Left lung (tissue), 14 donors: ENCODE measurements at regions of chr1 and their contacts with region 1.

Region 1: DNA sequence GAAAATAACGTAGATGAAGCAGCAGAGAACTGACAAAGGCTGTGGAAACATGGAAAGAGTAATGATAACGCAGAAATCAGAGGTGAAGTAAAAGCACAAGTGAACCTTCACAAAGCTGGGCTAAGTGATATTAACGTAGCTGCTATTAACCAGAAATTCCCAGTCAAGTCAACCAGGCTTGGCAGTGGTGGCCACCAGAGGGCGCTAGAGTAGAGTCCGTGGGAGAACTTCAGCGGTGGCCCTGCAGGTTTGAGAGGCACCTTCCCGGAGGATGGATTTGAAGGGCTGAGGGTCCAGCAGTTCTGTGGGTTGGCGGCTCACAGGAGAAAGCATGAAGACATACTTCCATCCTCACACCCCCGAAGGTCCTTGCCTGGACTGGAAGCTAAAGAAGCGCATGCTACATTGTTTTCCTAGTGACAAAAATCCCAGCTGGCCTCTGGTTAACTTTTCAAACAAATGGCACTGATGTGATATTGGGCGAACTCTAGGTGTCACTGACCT is 81.7 kb upstream of the ZNF648 start:
- DNase-seq: peak; percentile 84 to 95 (median 90)
- ATAC-seq: peak; percentile 84
- H3K4me3 ChIP-seq: no peak overlapping the region
- H3K27ac ChIP-seq: peak overlapping the region; percentile 92 to 99
- H3K4me1 ChIP-seq: peaks cover 19 to 55% of the 10 kb centered on the region in 2 donors
- H3K27me3 ChIP-seq: no peaks in the 10 kb centered on the region
- CTCF ChIP-seq: peak; percentile 91 to 97

Region 2: GRCh38 chr1:182084487-182085316 is 58.5 kb before region 1 on chr1:
- intact Hi-C with region 1: loop called in 1 of 2 experiments (anchors 5 kb)
- DNase-seq: peak; percentile 72 to 90 (median 86)
- ATAC-seq: peak; percentile 97
- H3K4me3 ChIP-seq: no peak overlapping the region
- H3K27ac ChIP-seq: peak overlapping the region; percentile 13 to 31
- H3K4me1 ChIP-seq: peaks cover 2 to 24% of the 10 kb centered on the region in 2 donors
- H3K27me3 ChIP-seq: no peaks in the 10 kb centered on the region
- CTCF ChIP-seq: peak; percentile 84 to 95

Region 3: DNA sequence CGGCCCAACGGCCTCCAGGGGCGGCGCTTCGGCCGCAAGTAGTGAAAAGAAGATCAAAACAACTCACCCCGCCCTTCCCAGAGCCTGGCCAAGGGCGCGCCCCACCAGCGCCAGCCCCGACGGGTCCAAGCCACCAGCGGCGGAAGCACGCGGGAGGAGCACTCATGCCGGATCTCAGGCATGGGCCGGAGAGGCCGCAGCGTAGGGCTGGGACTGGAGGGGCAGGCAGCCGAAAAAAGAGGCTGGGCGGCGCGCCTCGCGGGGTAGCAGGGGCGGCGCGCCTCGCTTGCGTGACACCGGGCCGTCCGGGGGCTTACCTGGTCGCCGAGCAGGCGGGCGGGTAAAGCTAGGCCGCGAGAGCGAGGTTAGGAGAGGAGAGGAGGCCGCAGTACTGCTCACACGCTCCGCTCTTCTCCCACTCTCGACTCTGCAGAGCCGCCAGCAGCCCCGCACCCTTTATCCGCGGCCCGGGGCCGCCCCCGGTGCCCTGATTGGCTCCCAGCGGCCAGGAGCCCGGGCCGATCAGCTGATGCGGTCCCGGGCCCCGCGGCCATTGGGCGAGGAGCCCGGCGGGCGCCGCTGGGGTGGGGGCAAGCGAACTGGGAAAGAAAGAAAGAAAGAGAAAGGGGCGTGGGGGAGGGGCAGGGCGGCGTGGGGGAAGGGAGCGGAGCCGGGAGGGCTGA is 248.3 kb after region 1 on chr1 and contains the start of gene GLUL:
- intact Hi-C with region 1: loop called (anchors 5 to 10 kb)
- DNase-seq: peak; percentile 92 to 98 (median 96)
- ATAC-seq: peak; percentile 90
- H3K4me3 ChIP-seq: peak within 1 kb of the TSS; percentile 70 to 95
- H3K27ac ChIP-seq: peak within 1 kb of the TSS; percentile 99
- H3K4me1 ChIP-seq: peaks cover 0 to 72% of the 10 kb centered on the region in 2 donors
- H3K27me3 ChIP-seq: no peaks in the 10 kb centered on the region
- CTCF ChIP-seq: peak in 1 of 2 donors; percentile 38
- polyA plus RNA-seq, gene GLUL: 377 to 463 (median 429) TPM

Region 4: DNA sequence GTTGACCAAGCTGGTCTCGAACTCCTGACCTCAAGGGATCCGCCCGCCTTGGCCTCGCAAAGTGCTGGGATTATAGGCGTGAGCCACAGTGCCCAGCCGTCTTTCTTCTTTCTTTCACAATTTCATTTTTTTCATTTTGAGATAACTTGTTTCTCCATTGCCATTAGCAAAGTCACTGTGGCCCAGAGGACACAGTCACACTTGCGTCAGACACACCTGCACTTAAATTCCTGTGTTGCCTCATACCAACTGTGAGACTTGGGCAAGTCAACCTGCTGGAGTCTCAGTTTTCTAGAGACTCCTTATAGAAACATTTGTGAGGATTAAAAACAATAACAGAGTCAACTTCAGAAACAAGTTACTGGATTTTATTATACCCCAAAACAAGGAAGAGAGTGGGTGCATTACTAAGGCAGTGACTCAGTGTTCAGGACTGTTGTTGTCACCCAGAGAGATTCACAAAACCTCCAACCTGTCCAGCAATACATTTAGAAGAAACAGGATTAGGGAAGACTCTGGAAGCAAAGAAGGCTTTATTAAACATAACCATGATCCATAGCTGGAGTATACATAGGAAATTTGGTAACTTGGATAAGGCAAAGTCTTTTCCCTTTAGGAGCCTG is 254.7 kb after region 1 on chr1:
- intact Hi-C with region 1: loop called (anchors 5 to 10 kb)
- DNase-seq: peak in 1 of 4 donors; percentile 52
- ATAC-seq: peak; percentile 71
- H3K4me3 ChIP-seq: no peak overlapping the region
- H3K27ac ChIP-seq: peak overlapping the region; percentile 39 to 59
- H3K4me1 ChIP-seq: peaks cover 0 to 48% of the 10 kb centered on the region in 2 donors
- H3K27me3 ChIP-seq: no peaks in the 10 kb centered on the region
- CTCF ChIP-seq: no peak